ENCODE measurements at regions of chr11 and their contacts with region 1.

Region 1: DNA sequence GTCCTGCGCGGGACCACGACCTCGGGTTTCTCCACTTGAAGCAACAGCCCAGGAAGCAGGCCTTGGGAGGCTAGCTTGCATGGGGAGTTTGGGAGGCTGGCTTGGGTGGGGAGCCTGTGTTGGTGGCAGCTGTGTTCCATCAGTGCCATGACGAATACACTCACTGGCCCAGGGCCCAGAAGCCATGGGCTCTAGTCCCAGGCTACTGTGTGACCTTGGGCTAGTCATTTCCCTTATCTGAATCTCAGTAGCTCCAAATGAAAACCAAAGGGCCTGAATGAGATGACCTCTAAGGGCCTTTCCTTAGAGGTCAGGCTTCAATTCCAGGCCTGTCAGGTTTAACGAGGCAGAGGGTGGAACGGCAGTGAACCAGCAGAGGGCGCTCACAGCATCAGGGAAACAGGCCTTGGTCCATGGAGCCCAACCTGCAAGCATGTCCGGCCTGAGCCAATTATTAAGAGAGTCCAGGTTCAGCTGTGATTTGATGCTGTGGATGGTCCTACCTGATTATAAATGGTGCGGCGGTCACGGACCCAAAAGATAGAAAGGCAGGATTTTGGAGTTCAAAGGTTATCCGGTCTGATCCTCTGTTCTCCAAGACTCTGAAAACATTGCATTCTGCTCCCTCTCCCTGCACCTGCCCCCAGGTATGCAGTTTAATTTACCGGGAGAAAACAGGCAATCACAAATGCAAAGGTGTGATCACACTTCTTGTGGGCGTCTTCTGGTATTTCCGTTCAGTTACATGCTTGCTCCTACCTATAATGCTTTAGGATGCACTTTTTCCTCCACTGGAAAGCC is 15.9 kb downstream of the PTPN5 start:
- DNase-seq: peak; percentile 71 to 82 (median 78)
- ATAC-seq: peak; percentile 96
- H3K4me3 ChIP-seq: no peak overlapping the region
- H3K27ac ChIP-seq: no peak overlapping the region
- H3K4me1 ChIP-seq: no peaks in the 10 kb centered on the region; a peak in 1 of 5 replicates
- H3K27me3 ChIP-seq: peaks cover 0 to 45% of the 10 kb centered on the region in 2 experiments; a peak in 3 of 5 replicates
- CTCF ChIP-seq: peak; percentile 85 to 89 (median 88)
- EP300 ChIP-seq: no peak
- POLR2A ChIP-seq: no peak
- RAD21 ChIP-seq: peak in 1 of 2 experiments; percentile 69; a peak in 3 of 4 replicates

Region 2: GRCh38 chr11:18802381-18803257 is 26.9 kb after region 1 on chr11:
- CTCF ChIA-PET with region 1: interaction called, 3 read pairs
- POLR2A ChIA-PET with region 1: no interaction called
- in situ Hi-C with region 1: no loop called
- intact Hi-C with region 1: loop called (anchors 1 kb)
- DNase-seq: peak; percentile 35 to 60 (median 42)
- ATAC-seq: peak; percentile 81
- H3K4me3 ChIP-seq: no peak overlapping the region
- H3K27ac ChIP-seq: no peak overlapping the region
- H3K4me1 ChIP-seq: no peaks in the 10 kb centered on the region
- H3K27me3 ChIP-seq: no peaks in the 10 kb centered on the region
- CTCF ChIP-seq: peak; percentile 57 to 78 (median 66); a peak in 5 of 6 replicates
- EP300 ChIP-seq: no peak
- POLR2A ChIP-seq: no peak
- RAD21 ChIP-seq: peak; percentile 47 to 58

Region 3: DNA sequence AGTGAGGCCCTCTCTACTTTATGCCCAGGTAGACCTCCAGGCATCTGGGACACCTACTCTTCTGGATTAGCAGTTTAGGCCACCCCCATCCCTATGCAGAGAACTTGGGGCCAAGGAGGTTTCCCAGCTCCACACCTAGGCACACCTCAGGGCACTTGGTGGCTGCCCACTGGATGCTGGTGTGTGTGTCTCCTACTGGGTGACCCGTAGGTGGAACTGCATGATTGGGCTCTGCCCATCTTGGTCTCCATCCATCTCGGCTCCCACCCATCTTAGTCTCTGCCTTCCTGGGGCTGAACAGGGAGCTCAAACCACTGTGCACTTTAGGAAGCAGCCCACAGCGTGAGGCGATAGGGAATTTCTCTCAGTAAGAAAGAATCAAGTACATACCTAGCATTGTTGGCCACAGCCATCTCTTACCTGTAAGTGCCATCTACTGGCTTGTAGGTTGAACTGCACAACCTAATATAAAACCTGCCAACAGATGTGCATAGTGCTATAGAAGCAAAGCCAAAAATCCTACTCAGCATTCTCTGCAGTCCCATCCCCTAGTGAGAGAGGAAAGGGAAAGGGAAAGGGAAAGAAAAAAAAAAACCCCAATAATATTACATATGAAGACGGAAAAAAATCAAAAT is 77.5 kb after region 1 on chr11:
- CTCF ChIA-PET with region 1: no interaction called
- POLR2A ChIA-PET with region 1: no interaction called
- in situ Hi-C with region 1: no loop called
- intact Hi-C with region 1: loop called (anchors 1 kb)
- DNase-seq: peak in 1 of 4 experiments; percentile 17
- ATAC-seq: peak; percentile 83
- H3K4me3 ChIP-seq: no peak overlapping the region
- H3K27ac ChIP-seq: no peak overlapping the region
- H3K4me1 ChIP-seq: no peaks in the 10 kb centered on the region
- H3K27me3 ChIP-seq: no peaks in the 10 kb centered on the region; a peak in 1 of 5 replicates
- CTCF ChIP-seq: peak; percentile 52 to 57 (median 55); a peak in 4 of 6 replicates
- EP300 ChIP-seq: no peak
- POLR2A ChIP-seq: no peak
- RAD21 ChIP-seq: peak in 1 of 2 experiments; percentile 58; a peak in 2 of 4 replicates